ENCODE measurements at regions of chr12 and their contacts with region 1.

Region 1: GRCh38 chr12:1939801-1940607 is 21.6 kb upstream of the CACNA2D4 start:
- DNase-seq: peak; percentile 92
- H3K4me3 ChIP-seq: peak overlapping the region in 2 of 4 donors; percentile 1 to 11
- H3K27ac ChIP-seq: peak overlapping the region; percentile 73 to 84 (median 79)
- H3K4me1 ChIP-seq: peaks cover 0 to 63% (median 52%) of the 10 kb centered on the region in 4 donors
- H3K27me3 ChIP-seq: no peaks in the 10 kb centered on the region
- CTCF ChIP-seq: peak; percentile 92 to 99 (median 94)
- EP300 ChIP-seq: no peak
- POLR2A ChIP-seq: no peak

Region 2: GRCh38 chr12:1634590-1635191 is 305.3 kb before region 1 on chr12:
- intact Hi-C with region 1: loop called (anchors 5 kb)
- DNase-seq: peak; percentile 92
- H3K4me3 ChIP-seq: no peak overlapping the region
- H3K27ac ChIP-seq: peak overlapping the region in 2 of 4 donors; percentile 84 to 87
- H3K4me1 ChIP-seq: peaks cover 0 to 64% (median 44%) of the 10 kb centered on the region in 4 donors
- H3K27me3 ChIP-seq: no peaks in the 10 kb centered on the region
- CTCF ChIP-seq: peak; percentile 63 to 84 (median 75)
- EP300 ChIP-seq: no peak
- POLR2A ChIP-seq: no peak

Region 3: DNA sequence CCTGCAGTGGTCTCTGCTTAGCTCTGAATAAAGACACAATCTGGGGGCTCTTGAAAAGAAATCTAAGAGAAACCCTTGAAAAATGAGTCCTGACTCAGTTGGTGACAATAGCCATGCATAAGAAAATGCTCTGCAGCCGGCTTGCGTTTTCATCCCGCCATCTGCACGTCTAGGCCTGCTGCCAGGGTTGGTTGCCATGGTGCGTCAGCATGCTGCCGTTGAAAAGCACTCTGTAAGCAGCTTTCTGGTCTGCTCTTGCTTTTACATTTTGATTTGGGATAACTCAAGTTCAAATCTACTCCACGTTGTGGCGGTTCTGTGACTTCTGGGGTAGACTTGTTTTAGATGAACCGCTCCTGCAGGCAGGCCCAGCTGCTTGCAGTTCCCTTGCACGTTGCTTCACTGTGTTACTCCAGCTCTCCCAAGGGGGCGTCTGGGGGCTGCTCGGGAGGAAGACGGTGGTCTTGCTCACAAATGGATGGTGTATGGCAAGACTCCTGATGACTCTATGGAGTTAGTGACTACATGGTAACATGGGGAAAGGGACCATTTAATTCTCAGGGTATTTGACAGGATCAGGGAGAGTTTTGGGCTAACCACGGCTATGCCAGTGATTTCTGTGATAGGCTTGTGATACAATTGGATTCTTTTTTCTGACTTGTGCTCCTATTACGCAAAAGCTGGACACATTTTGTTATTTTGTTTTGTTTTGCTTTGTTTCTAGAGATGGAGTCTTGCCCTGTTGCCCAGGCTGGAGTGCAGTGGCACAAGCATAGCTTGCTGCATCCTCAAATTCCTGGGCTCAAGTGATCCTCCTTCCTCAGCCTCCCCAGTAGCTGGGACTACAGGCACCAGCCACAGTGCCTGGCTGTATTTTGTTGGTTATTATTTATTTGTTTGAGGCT is 295.2 kb before region 1 on chr12:
- intact Hi-C with region 1: loop called (anchors 5 kb)
- DNase-seq: peak; percentile 92
- H3K4me3 ChIP-seq: peak overlapping the region in 1 of 4 donors; percentile 8
- H3K27ac ChIP-seq: peak overlapping the region; percentile 42 to 77 (median 64)
- H3K4me1 ChIP-seq: peaks cover 0 to 82% (median 53%) of the 10 kb centered on the region in 4 donors
- H3K27me3 ChIP-seq: no peaks in the 10 kb centered on the region
- CTCF ChIP-seq: no peak
- EP300 ChIP-seq: no peak
- POLR2A ChIP-seq: no peak

Region 4: DNA sequence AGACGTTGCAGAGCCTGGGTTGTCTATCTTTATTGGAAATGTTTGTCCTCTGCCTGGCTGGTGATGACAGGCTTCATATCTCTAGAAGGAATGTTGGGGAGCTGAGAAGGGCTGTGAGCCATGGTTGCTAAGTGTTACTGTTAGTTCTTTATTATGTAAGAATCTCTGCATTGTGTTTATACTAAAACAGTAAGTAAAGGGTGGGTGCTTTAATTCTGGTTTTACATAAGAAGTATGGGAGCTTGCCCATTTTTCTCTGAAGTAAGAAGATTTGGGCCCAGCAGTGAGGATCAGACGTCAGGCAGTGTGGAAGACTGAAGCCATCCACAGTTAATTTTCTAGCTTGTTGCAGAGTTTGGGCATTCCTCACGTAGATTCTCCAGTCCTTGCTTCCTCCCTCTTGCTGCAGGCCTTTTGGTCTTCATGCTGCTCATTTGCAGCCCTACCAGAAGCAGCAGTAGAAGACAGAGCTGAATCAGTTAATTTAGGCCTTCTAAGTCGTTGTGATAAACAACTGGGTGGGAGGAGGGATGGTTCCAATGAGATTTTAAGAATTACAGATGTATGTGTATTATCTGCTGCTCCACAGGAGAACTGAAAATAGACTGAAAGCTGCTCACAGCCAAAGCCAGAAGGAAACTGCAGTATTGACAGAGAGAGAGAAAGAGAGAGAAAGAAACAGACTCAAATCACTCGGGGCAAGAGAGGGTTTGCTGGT is 289.6 kb before region 1 on chr12:
- intact Hi-C with region 1: loop called (anchors 5 kb)
- DNase-seq: no peak
- H3K4me3 ChIP-seq: no peak overlapping the region
- H3K27ac ChIP-seq: peak overlapping the region; percentile 67 to 78 (median 76)
- H3K4me1 ChIP-seq: peaks cover 0 to 62% (median 53%) of the 10 kb centered on the region in 4 donors
- H3K27me3 ChIP-seq: no peaks in the 10 kb centered on the region
- CTCF ChIP-seq: no peak
- EP300 ChIP-seq: no peak
- POLR2A ChIP-seq: no peak

Region 5: GRCh38 chr12:1896964-1897363 is 43.0 kb before region 1 on chr12:
- intact Hi-C with region 1: no loop called
- DNase-seq: no peak
- H3K4me3 ChIP-seq: no peak overlapping the region
- H3K27ac ChIP-seq: no peak overlapping the region
- H3K4me1 ChIP-seq: no peaks in the 10 kb centered on the region
- H3K27me3 ChIP-seq: no peaks in the 10 kb centered on the region
- CTCF ChIP-seq: no peak
- EP300 ChIP-seq: no peak
- POLR2A ChIP-seq: no peak